H1 (cell line): ENCODE measurements at regions of chr17 and their contacts with region 1.

Region 1: GRCh38 chr17:75261336-75262111 is at the starts of genes GGA3 and MRPS7:
- DNase-seq: peak in 1 of 2 experiments; percentile 96
- H3K4me3 ChIP-seq: peak within 1 kb of the TSS; percentile 89 to 99 (median 94)
- H3K27ac ChIP-seq: peak within 1 kb of the TSS; percentile 99
- H3K4me1 ChIP-seq: peaks cover 0 to 6% (median 3%) of the 10 kb centered on the region in 4 experiments; a peak in 4 of 7 replicates
- H3K27me3 ChIP-seq: no peaks in the 10 kb centered on the region
- CTCF ChIP-seq: no peak
- EP300 ChIP-seq: no peak
- POLR2A ChIP-seq: peak; percentile 85 to 92
- RAD21 ChIP-seq: no peak
- total RNA-seq, gene GGA3: 54.2 and 60.0 TPM in 2 replicates
- total RNA-seq, gene MRPS7: 75.5 and 79.4 TPM in 2 replicates

Region 2: DNA sequence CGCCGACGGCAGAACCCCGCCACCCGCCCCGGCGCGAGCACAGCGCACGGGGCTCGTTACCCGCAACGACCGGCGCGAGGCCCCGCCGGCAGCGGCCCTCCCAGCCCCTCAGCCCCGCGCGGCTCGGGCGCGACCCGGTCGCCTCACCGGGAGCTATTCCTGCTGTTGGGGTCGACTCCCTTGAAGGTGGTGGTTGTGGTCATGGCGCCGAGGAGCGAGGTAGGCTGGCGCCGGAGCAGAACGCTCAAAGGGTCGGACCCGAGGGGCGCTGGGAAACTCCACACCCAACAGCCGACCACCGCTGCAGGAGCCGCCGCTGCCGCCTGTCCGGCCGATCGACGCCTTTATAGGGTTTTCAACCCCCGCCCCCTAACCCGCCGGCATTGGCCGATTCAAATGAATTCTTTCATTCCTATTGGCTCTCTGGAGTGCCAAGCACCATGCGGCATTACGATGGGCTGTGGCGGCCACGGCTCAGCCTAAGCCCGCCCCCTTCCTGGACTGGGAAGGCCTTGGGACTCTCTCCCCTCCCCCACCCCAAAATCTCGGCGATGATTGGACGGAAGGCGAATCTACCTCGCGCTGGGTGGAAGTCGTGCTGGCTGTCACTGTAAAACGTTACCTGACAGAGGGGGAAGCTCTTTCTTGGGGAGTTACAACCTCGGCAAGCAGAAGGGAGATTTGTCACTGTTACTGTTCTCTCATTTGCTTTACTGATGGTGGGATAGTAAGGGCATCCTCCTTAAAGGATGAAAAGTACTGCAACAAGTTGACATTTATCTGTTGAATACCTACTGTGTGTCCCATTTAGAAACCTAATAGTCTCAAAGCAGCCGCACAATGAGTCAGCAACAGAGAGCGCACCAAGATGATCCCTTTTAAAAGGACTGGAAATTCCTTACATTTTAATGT is 107.1 kb before region 1 on chr17 and contains the start of gene JPT1:
- CTCF ChIA-PET with region 1: no interaction called
- POLR2A ChIA-PET with region 1: interaction called, 14 read pairs
- DNase-seq: peak; percentile 95 to 99
- H3K4me3 ChIP-seq: peak within 1 kb of the TSS; percentile 87 to 95 (median 94)
- H3K27ac ChIP-seq: peak within 1 kb of the TSS; percentile 53
- H3K4me1 ChIP-seq: peaks cover 3 to 12% (median 9%) of the 10 kb centered on the region in 4 experiments; a peak in 6 of 7 replicates
- H3K27me3 ChIP-seq: no peaks in the 10 kb centered on the region
- CTCF ChIP-seq: no peak
- EP300 ChIP-seq: no peak
- POLR2A ChIP-seq: peak; percentile 100
- RAD21 ChIP-seq: no peak
- total RNA-seq, gene JPT1: 340 and 369 TPM in 2 replicates

Region 3: GRCh38 chr17:75250009-75250471 is 11.5 kb before region 1 on chr17:
- CTCF ChIA-PET with region 1: interaction called, 369 read pairs
- POLR2A ChIA-PET with region 1: interaction called, 49 read pairs
- DNase-seq: no peak
- H3K4me3 ChIP-seq: no peak overlapping the region
- H3K27ac ChIP-seq: no peak overlapping the region
- H3K4me1 ChIP-seq: peaks cover 0 to 7% (median under 1%) of the 10 kb centered on the region in 4 experiments; a peak in 3 of 7 replicates
- H3K27me3 ChIP-seq: no peaks in the 10 kb centered on the region
- CTCF ChIP-seq: no peak
- EP300 ChIP-seq: no peak
- POLR2A ChIP-seq: no peak
- RAD21 ChIP-seq: no peak

Region 4: DNA sequence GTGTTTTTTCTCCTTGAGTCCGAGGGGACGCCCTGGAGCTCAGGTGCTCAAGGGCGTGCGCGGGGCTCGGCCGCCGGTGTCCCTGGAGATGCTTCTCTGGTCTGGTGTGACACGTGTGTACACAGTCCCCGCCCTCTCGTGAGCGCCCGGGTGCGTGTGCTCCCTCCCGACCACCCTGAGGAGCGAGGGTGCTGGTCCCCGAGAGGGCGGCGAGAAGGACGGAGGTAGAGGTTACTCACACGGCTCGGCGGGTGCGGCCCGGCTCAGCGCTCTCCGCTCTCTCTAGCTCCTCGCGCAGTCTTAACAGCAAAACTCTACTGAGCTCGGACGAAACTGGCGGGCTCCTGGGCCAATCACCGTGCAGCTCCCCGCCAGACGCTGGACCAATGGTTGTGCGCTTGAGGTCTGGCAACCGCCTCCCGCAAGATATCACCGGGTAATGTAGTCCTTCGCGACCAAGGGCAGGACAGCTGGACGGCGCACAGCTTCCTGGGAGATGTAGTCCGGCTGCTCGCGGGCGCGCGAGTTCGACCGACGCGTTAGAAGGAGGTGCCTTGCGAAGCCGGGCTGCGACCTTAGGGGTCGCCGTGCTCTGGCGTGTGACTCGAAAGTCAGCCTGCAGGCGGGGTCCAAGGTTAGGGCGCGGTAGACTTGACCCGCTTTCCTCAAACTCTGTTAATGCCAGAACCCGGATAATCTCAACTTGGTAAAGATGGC is 27.7 kb after region 1 on chr17 and contains the start of gene SLC25A19:
- CTCF ChIA-PET with region 1: interaction called, 8 read pairs
- POLR2A ChIA-PET with region 1: interaction called, 11 read pairs
- DNase-seq: peak; percentile 94 to 98
- H3K4me3 ChIP-seq: peak within 1 kb of the TSS; percentile 77 to 94 (median 82)
- H3K27ac ChIP-seq: no peak within 1 kb of the TSS
- H3K4me1 ChIP-seq: no peaks in the 10 kb centered on the region; a peak in 3 of 7 replicates
- H3K27me3 ChIP-seq: no peaks in the 10 kb centered on the region; a peak in 2 of 7 replicates
- CTCF ChIP-seq: peak; percentile 57 to 83 (median 69)
- EP300 ChIP-seq: no peak
- POLR2A ChIP-seq: peak in 1 of 2 experiments; percentile 83; a peak in 2 of 3 replicates
- RAD21 ChIP-seq: peak; percentile 63 to 72
- total RNA-seq, gene SLC25A19: 28.6 and 33.3 TPM in 2 replicates

Region 5: GRCh38 chr17:75412455-75413317 is 151.2 kb after region 1 on chr17:
- CTCF ChIA-PET with region 1: interaction called, 6 read pairs
- POLR2A ChIA-PET with region 1: interaction called, 10 read pairs
- DNase-seq: peak in 1 of 2 experiments; percentile 86
- H3K4me3 ChIP-seq: no peak overlapping the region
- H3K27ac ChIP-seq: no peak overlapping the region
- H3K4me1 ChIP-seq: no peaks in the 10 kb centered on the region
- H3K27me3 ChIP-seq: no peaks in the 10 kb centered on the region
- CTCF ChIP-seq: peak; percentile 70 to 95 (median 87)
- EP300 ChIP-seq: no peak
- POLR2A ChIP-seq: no peak
- RAD21 ChIP-seq: peak; percentile 94 to 98